ENCODE measurements at regions of chr11 and their contacts with region 1.

Region 1: DNA sequence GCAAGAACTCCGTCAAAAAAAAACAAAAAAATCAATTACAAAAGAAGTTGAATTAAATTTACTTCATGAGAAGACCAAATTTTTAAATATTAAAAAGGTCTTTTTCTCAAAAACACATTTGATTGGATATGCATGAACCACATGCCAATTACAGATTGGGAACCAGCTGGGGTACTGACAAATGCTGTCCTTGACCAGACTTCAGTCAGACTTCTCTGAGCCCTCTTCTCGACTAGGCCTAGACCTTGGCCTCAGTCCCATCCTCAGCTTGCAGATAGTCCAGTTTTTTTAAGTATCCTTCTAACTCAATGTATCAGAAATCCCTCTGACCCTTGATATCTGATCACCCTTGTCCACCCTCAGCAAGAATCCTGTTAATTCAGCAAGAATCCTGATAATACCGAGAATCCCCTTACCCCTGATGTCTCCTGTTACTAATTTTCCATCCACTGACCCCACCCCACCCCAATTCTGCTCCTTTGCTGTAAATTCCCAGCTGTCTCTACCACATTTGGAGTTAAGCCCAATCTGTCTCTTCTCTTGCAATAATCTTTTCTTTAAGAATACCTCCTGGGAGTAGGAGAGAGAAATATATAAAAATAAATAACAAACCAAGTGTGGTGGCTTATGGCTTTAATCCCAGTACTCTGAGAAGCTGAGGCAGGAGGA is 30.9 kb downstream of the OR4D9 start:
- DNase-seq: no peak
- H3K4me3 ChIP-seq: no peak overlapping the region
- H3K27ac ChIP-seq: no peak overlapping the region
- H3K4me1 ChIP-seq: peaks cover 2 to 7% (median 6%) of the 10 kb centered on the region in 4 experiments
- H3K27me3 ChIP-seq: no peaks in the 10 kb centered on the region

Region 2: GRCh38 chr11:59520741-59521140 is 21.5 kb before region 1 on chr11:
- CTCF ChIA-PET with region 1: interaction called, 10 read pairs
- POLR2A ChIA-PET with region 1: no interaction called
- DNase-seq: no peak
- H3K4me3 ChIP-seq: no peak overlapping the region
- H3K27ac ChIP-seq: no peak overlapping the region
- H3K4me1 ChIP-seq: no peaks in the 10 kb centered on the region
- H3K27me3 ChIP-seq: no peaks in the 10 kb centered on the region